Calu3 (cell line): ENCODE measurements at regions of chr17 and their contacts with region 1.

Region 1: DNA sequence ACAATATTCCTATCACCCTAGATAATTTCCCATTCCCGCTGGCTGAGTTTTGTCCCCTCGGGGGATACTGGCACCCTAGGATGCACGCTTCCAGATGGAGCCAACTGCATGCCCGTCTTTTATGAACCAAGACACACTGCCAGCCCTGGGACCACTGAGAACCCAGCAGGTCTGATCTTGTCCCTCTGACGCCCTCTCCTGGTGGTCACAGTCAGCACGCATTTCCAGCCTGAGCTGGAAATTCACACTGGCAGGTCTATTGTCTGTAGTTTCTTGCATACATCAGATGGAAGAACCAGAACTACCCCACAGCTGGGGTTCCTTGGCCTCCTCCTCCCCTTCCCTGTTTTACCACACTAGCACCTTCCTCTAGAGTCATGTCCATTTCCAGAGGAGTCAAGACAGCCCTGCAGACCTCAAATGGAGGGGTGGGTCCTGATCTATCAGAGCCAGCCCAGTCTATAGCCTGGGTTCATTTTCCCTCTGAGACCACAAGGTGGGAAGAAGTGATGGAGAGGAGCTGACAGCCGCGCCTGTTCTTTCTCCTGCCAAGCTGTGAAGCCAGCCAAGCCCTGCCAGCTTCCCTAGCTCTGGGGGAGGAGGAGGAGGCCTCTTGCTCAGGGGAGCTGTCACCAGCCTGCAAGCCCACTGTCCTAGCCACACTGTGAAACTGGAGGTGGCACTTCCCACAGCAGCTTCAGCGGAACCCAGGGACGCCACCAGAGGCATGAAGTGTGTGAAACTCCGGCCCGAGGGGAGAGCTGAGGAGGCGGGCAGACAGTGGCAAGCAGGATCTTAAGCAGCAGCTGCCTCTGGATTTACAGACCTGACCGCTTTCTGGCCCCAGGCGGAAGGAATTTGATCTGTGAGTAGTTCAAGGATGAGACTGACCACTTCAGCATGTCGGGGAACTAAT is 29.3 kb downstream of the MXRA7 start:
- DNase-seq: peak; percentile 85
- H3K4me3 Mint-ChIP-seq: no peak overlapping the region
- H3K27ac Mint-ChIP-seq: no peak overlapping the region
- H3K4me1 Mint-ChIP-seq: peaks cover 6% of the 10 kb centered on the region
- H3K27me3 Mint-ChIP-seq: no peaks in the 10 kb centered on the region
- CTCF ChIP-seq: peak; percentile 68

Region 2: GRCh38 chr17:75950821-75951554 is 730.5 kb before region 1 on chr17:
- CTCF ChIA-PET with region 1: no interaction called
- intact Hi-C with region 1: no loop called
- DNase-seq: no peak
- H3K4me3 Mint-ChIP-seq: no peak overlapping the region
- H3K27ac Mint-ChIP-seq: no peak overlapping the region
- H3K4me1 Mint-ChIP-seq: no peaks in the 10 kb centered on the region
- H3K27me3 Mint-ChIP-seq: no peaks in the 10 kb centered on the region
- CTCF ChIP-seq: no peak

Region 3: GRCh38 chr17:76557368-76558197 is 123.9 kb before region 1 on chr17:
- CTCF ChIA-PET with region 1: interaction called, 19 read pairs
- intact Hi-C with region 1: loop called (anchors 1 kb)
- DNase-seq: peak; percentile 97
- H3K4me3 Mint-ChIP-seq: peak overlapping the region; percentile 91
- H3K27ac Mint-ChIP-seq: peak overlapping the region; percentile 97
- H3K4me1 Mint-ChIP-seq: peaks cover 8% of the 10 kb centered on the region
- H3K27me3 Mint-ChIP-seq: no peaks in the 10 kb centered on the region
- CTCF ChIP-seq: peak; percentile 69

Region 4: GRCh38 chr17:76671123-76671911 is 10.2 kb before region 1 on chr17:
- CTCF ChIA-PET with region 1: interaction called, 13 read pairs
- intact Hi-C with region 1: no loop called
- DNase-seq: peak; percentile 99
- H3K4me3 Mint-ChIP-seq: peak overlapping the region; percentile 82
- H3K27ac Mint-ChIP-seq: peak overlapping the region; percentile 81
- H3K4me1 Mint-ChIP-seq: peaks cover 31% of the 10 kb centered on the region
- H3K27me3 Mint-ChIP-seq: no peaks in the 10 kb centered on the region
- CTCF ChIP-seq: no peak